ENCODE measurements at regions of chr11 and their contacts with region 1.

Region 1: GRCh38 chr11:123020968-123021367 is 39.3 kb upstream of the BSX start:
- DNase-seq: no peak
- ATAC-seq: peak; percentile 64
- H3K4me3 ChIP-seq: no peak overlapping the region
- H3K27ac ChIP-seq: no peak overlapping the region
- H3K4me1 ChIP-seq: peaks cover 5% of the 10 kb centered on the region; the same call in 1 of the 2 replicates
- H3K27me3 ChIP-seq: no peaks in the 10 kb centered on the region
- CTCF ChIP-seq: peak; percentile 82

Region 2: DNA sequence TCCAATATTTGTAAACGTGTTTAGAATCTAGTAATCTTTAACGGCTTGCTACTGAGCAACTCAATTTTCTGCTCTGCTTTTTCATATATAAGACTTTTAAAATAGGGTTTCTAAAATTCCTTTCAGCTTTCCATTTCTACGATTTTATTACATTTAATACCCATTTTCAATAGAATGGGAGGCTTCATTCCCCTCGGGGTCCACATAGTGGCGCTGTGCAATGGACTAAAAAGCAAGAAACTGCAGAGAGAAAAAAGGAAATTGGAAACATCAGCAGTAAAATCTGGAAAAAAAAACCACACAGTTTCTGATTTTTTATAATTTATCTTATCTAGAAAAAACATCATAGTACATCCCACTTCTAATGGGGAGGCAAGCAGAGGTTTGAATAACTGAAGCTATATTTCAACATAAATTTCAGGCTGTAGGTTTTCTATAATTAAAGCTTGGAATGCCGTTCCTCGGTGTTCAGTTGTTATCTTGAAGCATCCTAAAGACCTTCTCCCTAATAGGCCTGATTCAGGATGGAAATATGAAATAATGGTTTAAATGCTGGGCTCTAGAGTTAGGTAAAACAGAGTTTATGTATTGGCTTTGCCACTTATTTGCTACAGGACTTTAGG is 157.2 kb before region 1 on chr11:
- CTCF ChIA-PET with region 1: interaction called, 15 read pairs
- POLR2A ChIA-PET with region 1: interaction called, 11 read pairs
- in situ Hi-C with region 1: no loop called
- intact Hi-C with region 1: loop called (anchors 1 kb)
- DNase-seq: no peak
- ATAC-seq: no peak
- H3K4me3 ChIP-seq: no peak overlapping the region
- H3K27ac ChIP-seq: no peak overlapping the region
- H3K4me1 ChIP-seq: peaks cover 4% of the 10 kb centered on the region; the same call in 1 of the 2 replicates
- H3K27me3 ChIP-seq: no peaks in the 10 kb centered on the region
- CTCF ChIP-seq: peak; percentile 90; the same call in 1 of the 2 replicates

Region 3: DNA sequence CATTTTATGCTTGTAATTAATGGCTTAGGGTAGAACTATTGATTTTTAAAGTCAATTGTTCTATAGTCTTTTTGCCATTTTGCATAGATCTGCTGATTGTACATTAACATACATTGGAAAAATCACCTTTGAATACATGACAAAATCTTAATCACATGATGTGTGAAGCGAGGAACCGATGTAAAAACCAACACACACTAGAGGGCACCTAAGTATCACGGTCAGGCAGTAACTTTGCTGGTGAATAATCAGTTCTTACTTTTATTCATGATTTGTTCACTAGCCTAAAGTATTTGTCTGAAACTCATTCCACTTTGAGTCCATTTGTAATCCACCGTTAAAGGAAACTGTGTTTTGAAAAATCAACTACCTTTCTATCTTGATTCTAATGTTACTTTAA is 110.2 kb before region 1 on chr11:
- CTCF ChIA-PET with region 1: interaction called, 4 read pairs
- POLR2A ChIA-PET with region 1: no interaction called
- in situ Hi-C with region 1: no loop called
- intact Hi-C with region 1: loop called (anchors 1 kb)
- DNase-seq: peak; percentile 8
- ATAC-seq: 0 out of 2 replicates have a peak, but pooled peaks have one; percentile 71
- H3K4me3 ChIP-seq: no peak overlapping the region
- H3K27ac ChIP-seq: no peak overlapping the region
- H3K4me1 ChIP-seq: no peaks in the 10 kb centered on the region
- H3K27me3 ChIP-seq: no peaks in the 10 kb centered on the region
- CTCF ChIP-seq: peak; percentile 61; the same call in 1 of the 2 replicates

Region 4: GRCh38 chr11:122917311-122917710 is 103.7 kb before region 1 on chr11:
- CTCF ChIA-PET with region 1: interaction called, 10 read pairs
- POLR2A ChIA-PET with region 1: no interaction called
- in situ Hi-C with region 1: no loop called
- intact Hi-C with region 1: no loop called
- DNase-seq: no peak
- ATAC-seq: no peak
- H3K4me3 ChIP-seq: no peak overlapping the region
- H3K27ac ChIP-seq: no peak overlapping the region
- H3K4me1 ChIP-seq: no peaks in the 10 kb centered on the region
- H3K27me3 ChIP-seq: no peaks in the 10 kb centered on the region
- CTCF ChIP-seq: no peak

Region 5: DNA sequence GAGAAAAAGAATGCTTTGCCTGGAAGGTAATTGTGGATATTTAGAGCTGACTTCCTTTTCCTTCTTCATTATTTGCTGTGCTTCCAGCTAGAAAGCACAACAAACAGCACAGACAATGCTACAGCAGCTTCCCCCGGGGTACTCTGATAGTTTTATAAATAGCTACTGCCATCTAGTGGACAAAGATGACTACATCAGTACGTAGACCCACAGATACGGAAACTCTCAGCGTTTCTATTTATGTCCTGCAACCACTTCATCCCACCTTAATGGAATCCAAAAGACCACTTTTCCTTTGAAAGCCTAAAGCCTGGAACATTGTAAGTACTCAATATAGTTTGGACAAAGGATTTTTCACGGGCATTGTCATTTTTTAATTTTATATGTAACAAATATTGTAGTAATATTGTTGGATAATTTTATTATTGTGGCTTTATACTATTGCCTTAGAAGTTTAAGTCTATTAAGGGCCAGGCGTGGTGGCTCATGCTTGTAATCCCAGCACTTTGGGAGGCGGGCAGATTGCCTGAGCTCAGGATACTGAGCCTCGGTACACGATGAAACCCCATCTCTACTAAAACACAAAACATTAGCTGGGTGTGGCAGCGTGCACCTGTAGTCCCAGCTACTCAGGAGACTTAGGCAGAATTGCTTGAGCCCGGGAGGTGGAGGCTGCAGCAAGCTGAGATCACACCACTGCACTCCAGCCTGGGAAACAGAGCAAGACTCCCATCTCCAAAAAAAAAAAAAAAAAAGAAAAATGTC is 33.5 kb after region 1 on chr11:
- CTCF ChIA-PET with region 1: interaction called, 11 read pairs
- POLR2A ChIA-PET with region 1: interaction called, 5 read pairs
- in situ Hi-C with region 1: no loop called
- intact Hi-C with region 1: no loop called
- DNase-seq: no peak
- ATAC-seq: peak; percentile 82
- H3K4me3 ChIP-seq: no peak overlapping the region
- H3K27ac ChIP-seq: no peak overlapping the region
- H3K4me1 ChIP-seq: peaks cover 21% of the 10 kb centered on the region
- H3K27me3 ChIP-seq: no peaks in the 10 kb centered on the region
- CTCF ChIP-seq: peak; percentile 86